Naive thymus-derived CD4-positive, alpha-beta T cell (primary cell): ENCODE measurements at regions of chr7 and their contacts with region 1.

Region 1: GRCh38 chr7:155380221-155380861 is 77.6 kb upstream of the EN2 start:
- DNase-seq: peak; percentile 17 to 60 (median 49)
- ATAC-seq: peak; percentile 84
- H3K4me3 ChIP-seq: no peak overlapping the region
- H3K4me3 Mint-ChIP-seq: peak overlapping the region in 9 of 10 donors; percentile 14 to 72 (median 54)
- H3K27ac ChIP-seq: no peak overlapping the region
- H3K27ac Mint-ChIP-seq: peak overlapping the region in 1 of 9 donors; percentile 51
- H3K4me1 ChIP-seq: peaks cover 0 to 16% of the 10 kb centered on the region in 2 donors
- H3K4me1 Mint-ChIP-seq: peaks cover 13 to 50% (median 34%) of the 10 kb centered on the region in 7 donors
- H3K27me3 ChIP-seq: peaks cover 0 to 14% of the 10 kb centered on the region in 2 donors
- H3K27me3 Mint-ChIP-seq: peaks cover 68 to 89% (median 80%) of the 10 kb centered on the region in 5 donors

Region 2: GRCh38 chr7:155363852-155364562 is 16.3 kb before region 1 on chr7:
- CTCF ChIA-PET with region 1: no interaction called
- POLR2A ChIA-PET with region 1: no interaction called
- intact Hi-C with region 1: no loop called
- DNase-seq: no peak
- ATAC-seq: no peak
- H3K4me3 ChIP-seq: no peak overlapping the region
- H3K4me3 Mint-ChIP-seq: no peak overlapping the region
- H3K27ac ChIP-seq: no peak overlapping the region
- H3K27ac Mint-ChIP-seq: no peak overlapping the region
- H3K4me1 ChIP-seq: no peaks in the 10 kb centered on the region
- H3K4me1 Mint-ChIP-seq: peaks cover 0 to 4% (median 0%) of the 10 kb centered on the region in 7 donors
- H3K27me3 ChIP-seq: peaks cover 0 to 3% of the 10 kb centered on the region in 2 donors
- H3K27me3 Mint-ChIP-seq: peaks cover 30 to 50% (median 36%) of the 10 kb centered on the region in 5 donors

Region 3: DNA sequence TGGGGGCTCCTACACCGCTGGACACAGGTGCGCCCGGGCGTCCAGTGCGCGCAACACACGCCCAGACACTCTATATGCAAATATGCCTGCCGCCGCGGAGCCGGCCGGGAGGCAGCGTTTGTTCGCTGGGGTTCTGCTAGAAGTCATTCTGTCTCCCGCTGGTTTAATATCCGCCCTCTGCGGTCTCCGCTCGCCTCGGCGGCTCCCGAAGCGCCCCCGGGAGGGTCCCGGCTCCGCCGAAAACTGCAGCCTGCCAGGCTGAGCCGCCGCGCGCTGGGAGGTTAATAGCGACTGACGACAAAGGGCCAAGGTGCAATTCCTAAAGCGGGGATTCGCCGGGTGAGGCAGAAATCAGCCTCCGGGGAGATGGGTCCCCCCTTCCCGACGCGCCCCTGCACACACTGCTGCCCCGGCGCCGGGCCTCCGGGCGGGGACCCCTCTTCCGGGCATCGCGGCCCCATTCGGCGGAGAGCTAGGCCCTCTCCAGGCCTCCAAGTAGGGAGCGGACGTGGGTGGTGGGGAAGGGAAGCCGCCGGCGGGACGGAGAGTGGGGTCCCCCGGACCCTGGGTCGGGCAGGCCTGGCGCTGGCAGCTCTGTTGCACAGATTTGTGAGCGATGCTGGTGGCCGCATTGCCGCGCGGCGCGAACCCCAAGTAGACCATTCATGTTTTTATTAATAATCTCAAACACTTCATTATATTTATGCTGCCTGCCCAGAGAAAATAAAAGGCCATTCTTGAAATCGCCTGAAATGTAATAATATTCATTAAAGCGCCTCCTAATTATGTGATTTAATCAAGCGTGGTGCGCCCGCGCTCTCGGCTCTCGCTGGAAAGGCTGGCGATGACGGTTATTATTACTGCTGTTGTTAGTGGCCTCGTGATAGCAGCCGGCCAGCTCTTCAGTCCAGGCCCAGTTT is 86.7 kb after region 1 on chr7:
- CTCF ChIA-PET with region 1: no interaction called
- POLR2A ChIA-PET with region 1: no interaction called
- intact Hi-C with region 1: loop called in 1 of 2 experiments (anchors 2 kb)
- DNase-seq: no peak
- ATAC-seq: peak; percentile 38
- H3K4me3 ChIP-seq: no peak overlapping the region
- H3K4me3 Mint-ChIP-seq: peak overlapping the region in 8 of 10 donors; percentile 2 to 62 (median 23)
- H3K27ac ChIP-seq: no peak overlapping the region
- H3K27ac Mint-ChIP-seq: peak overlapping the region in 1 of 9 donors; percentile 76
- H3K4me1 ChIP-seq: no peaks in the 10 kb centered on the region
- H3K4me1 Mint-ChIP-seq: peaks cover 6 to 24% (median 10%) of the 10 kb centered on the region in 7 donors
- H3K27me3 ChIP-seq: peaks cover 12 to 28% of the 10 kb centered on the region in 2 donors
- H3K27me3 Mint-ChIP-seq: peaks cover 73 to 92% (median 82%) of the 10 kb centered on the region in 5 donors

Region 4: GRCh38 chr7:155738652-155739537 is 358.6 kb after region 1 on chr7:
- CTCF ChIA-PET with region 1: interaction called, 4 read pairs
- POLR2A ChIA-PET with region 1: no interaction called
- intact Hi-C with region 1: loop called in 1 of 2 experiments (anchors 1 kb)
- DNase-seq: peak; percentile 27 to 85 (median 77)
- ATAC-seq: peak; percentile 93
- H3K4me3 ChIP-seq: no peak overlapping the region
- H3K4me3 Mint-ChIP-seq: peak overlapping the region in 9 of 10 donors; percentile 15 to 71 (median 62)
- H3K27ac ChIP-seq: peak overlapping the region; percentile 30
- H3K27ac Mint-ChIP-seq: peak overlapping the region; percentile 24 to 97 (median 87)
- H3K4me1 ChIP-seq: peaks cover 0 to 12% of the 10 kb centered on the region in 2 donors
- H3K4me1 Mint-ChIP-seq: peaks cover 17 to 71% (median 49%) of the 10 kb centered on the region in 7 donors
- H3K27me3 ChIP-seq: no peaks in the 10 kb centered on the region
- H3K27me3 Mint-ChIP-seq: no peaks in the 10 kb centered on the region

Region 5: GRCh38 chr7:155769701-155770100 is 389.4 kb after region 1 on chr7:
- CTCF ChIA-PET with region 1: no interaction called
- POLR2A ChIA-PET with region 1: no interaction called
- intact Hi-C with region 1: loop called (anchors 1 to 2 kb)
- DNase-seq: no peak
- ATAC-seq: no peak
- H3K4me3 ChIP-seq: no peak overlapping the region
- H3K4me3 Mint-ChIP-seq: no peak overlapping the region
- H3K27ac ChIP-seq: no peak overlapping the region
- H3K27ac Mint-ChIP-seq: peak overlapping the region in 1 of 9 donors; percentile 52
- H3K4me1 ChIP-seq: peaks cover 4 to 6% of the 10 kb centered on the region in 2 donors
- H3K4me1 Mint-ChIP-seq: peaks cover 4 to 27% (median 11%) of the 10 kb centered on the region in 7 donors
- H3K27me3 ChIP-seq: no peaks in the 10 kb centered on the region
- H3K27me3 Mint-ChIP-seq: no peaks in the 10 kb centered on the region

Region 6: DNA sequence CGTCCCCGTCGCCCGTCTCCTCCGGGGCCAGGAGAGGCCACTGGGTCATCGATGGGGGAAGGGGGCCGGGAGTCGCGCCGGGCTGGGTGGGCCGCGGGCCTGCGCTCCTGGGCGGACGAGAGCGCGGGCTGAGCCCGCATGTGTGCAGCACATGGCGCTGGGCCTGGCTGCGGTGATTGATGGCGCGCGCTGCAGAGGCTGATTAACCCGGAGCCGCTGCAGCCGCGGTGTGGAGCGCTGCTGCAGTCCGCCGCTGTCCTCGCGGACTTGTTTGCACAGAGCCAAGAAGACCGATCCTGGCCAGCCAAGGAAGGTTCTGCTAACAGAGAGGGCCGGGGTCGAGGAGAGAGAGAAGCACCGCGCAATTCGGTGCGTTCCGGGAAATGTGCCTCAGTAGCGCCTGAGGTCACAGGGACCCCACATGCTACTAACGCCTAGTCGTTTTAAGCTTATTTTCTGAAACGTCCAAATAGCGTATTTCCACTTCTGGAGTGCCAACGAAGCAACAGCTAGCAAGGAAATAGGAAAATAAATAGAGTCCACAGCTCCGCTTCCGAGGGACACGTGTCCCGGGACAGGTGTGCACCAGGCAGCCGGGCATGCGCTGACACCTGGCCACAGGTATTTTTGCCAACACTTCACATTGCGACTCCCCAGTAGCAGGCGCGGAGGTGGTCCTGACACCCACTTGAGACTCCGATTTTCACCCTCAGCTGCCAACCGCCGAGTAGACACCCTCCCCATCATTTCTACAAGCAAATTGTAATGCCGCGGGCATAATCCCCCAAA is 1623.9 kb after region 1 on chr7:
- CTCF ChIA-PET with region 1: no interaction called
- POLR2A ChIA-PET with region 1: no interaction called
- intact Hi-C with region 1: loop called in 1 of 2 experiments (anchors 5 kb)
- DNase-seq: peak in 1 of 9 donors; percentile 20
- ATAC-seq: no peak
- H3K4me3 ChIP-seq: no peak overlapping the region
- H3K4me3 Mint-ChIP-seq: peak overlapping the region in 8 of 10 donors; percentile 8 to 56 (median 25)
- H3K27ac ChIP-seq: no peak overlapping the region
- H3K27ac Mint-ChIP-seq: peak overlapping the region in 1 of 9 donors; percentile 63
- H3K4me1 ChIP-seq: peaks cover 0 to 14% of the 10 kb centered on the region in 2 donors
- H3K4me1 Mint-ChIP-seq: peaks cover 13 to 32% (median 27%) of the 10 kb centered on the region in 7 donors
- H3K27me3 ChIP-seq: peaks cover 11 to 19% of the 10 kb centered on the region in 2 donors
- H3K27me3 Mint-ChIP-seq: peaks cover 52 to 79% (median 61%) of the 10 kb centered on the region in 5 donors